ENCODE measurements at regions of chr16 and their contacts with region 1.

Region 1: DNA sequence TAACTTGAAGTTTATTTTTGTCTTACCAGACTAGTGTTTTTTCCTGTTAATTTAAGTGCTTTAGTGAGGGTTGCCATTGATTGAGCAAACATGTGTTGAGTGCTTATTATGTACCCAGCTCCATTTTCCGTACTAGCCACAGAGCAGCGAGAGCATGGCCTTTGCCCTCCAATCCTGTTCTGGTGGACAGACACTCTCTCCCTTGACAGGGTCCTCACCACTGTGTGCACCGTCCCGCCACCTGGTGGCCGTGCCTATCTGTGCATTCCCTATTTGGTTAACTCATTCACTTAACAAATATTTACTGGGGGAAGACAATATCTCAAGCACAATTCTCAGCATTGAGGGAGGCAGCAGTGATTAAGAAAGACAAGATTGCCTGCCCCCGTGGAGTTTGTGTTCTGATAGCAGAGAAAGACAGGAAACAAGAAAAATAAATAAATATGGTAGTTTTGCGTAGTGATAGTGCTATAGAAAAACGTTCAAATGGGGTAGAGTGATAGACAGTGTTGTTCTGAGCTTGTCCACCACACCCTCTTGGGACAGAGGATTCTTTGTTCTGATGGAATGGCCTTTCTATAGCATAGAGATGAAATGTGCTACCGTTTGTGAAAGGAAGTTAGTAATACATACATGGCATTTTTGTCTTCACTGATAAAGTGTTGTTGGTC is 13.0 kb downstream of the CDH13 start:
- H3K4me3 ChIP-seq: no peak overlapping the region
- H3K27ac ChIP-seq: no peak overlapping the region
- H3K4me1 ChIP-seq: no peaks in the 10 kb centered on the region
- CTCF ChIP-seq: peak; percentile 39; the same call in 1 of the 2 replicates

Region 2: GRCh38 chr16:82603784-82604411 is 35.9 kb before region 1 on chr16:
- CTCF ChIA-PET with region 1: interaction called, 16 read pairs
- POLR2A ChIA-PET with region 1: no interaction called
- H3K4me3 ChIP-seq: no peak overlapping the region
- H3K27ac ChIP-seq: no peak overlapping the region
- H3K4me1 ChIP-seq: no peaks in the 10 kb centered on the region
- CTCF ChIP-seq: no peak

Measured in HEK293 (cell line).